ENCODE measurements at regions of chr1 and their contacts with region 1.

Region 1: GRCh38 chr1:57659804-57660203 is 235.9 kb upstream of the DAB1 start:
- DNase-seq: no peak
- H3K4me3 ChIP-seq: no peak overlapping the region
- H3K27ac ChIP-seq: no peak overlapping the region
- H3K4me1 ChIP-seq: no peaks in the 10 kb centered on the region
- H3K27me3 ChIP-seq: no peaks in the 10 kb centered on the region
- CTCF ChIP-seq: no peak
- EP300 ChIP-seq: no peak
- POLR2A ChIP-seq: no peak

Region 2: DNA sequence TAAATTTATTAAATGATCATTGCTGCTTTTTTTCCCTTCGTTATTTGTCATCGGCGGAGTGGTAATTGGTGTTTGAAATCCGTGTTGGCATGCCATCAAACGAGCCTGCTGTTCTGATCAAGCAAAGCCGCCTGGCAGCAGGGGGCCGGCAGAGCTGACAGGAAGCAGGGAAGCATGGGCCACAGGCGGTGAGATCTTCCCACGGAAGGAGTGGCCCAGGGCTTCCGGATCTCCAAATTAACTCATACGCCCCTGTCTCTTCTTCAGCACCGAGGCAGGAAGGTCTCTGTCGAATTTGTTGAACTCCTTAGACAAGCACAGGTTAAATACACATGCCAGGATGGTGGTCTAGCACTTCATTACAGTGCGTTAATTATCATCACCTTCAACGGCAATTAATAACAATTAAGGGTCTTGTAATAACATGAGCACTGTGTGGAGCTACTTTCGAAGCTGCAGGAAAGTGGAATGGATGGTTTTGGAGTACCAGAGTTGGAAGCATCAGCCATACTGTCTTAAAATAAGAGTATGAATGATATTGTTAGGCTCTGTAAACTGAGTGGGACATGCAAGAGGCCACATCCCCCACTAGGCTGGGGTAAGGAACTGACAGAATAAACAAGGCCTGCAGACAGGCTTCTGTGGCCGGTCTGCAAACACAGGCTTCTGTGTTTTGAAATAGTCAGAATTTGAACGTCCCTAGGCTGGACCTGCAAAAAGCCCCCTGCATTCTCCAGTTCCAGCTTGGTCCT is 36.6 kb before region 1 on chr1:
- intact Hi-C with region 1: no loop called
- DNase-seq: peak in 4 of 5 donors; percentile 34 to 57 (median 43)
- H3K4me3 ChIP-seq: no peak overlapping the region
- H3K27ac ChIP-seq: no peak overlapping the region
- H3K4me1 ChIP-seq: peaks cover 9% of the 10 kb centered on the region
- H3K27me3 ChIP-seq: no peaks in the 10 kb centered on the region
- CTCF ChIP-seq: no peak
- EP300 ChIP-seq: no peak
- POLR2A ChIP-seq: no peak

Region 3: DNA sequence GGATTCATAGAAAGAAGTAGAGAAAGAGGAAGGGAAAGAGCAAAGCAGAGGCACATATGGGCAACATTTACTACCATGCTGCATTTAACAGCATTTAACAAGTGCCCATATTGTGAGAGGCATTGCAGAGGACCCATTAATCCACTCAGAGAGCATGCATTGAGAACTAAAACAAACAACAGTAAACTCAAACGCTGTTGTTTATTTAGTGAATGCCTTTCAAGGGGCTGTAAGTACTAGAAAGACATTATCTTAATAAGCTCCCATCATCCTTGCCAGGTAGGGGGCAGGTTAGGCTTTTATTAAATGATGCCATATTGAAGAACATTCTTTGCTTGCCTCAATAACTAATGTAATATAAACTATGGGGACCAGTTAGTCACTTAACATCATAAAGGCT is 18.3 kb after region 1 on chr1:
- intact Hi-C with region 1: loop called in 1 of 4 experiments (anchors 2 kb)
- DNase-seq: no peak
- H3K4me3 ChIP-seq: no peak overlapping the region
- H3K27ac ChIP-seq: no peak overlapping the region
- H3K4me1 ChIP-seq: no peaks in the 10 kb centered on the region
- H3K27me3 ChIP-seq: no peaks in the 10 kb centered on the region
- CTCF ChIP-seq: no peak
- EP300 ChIP-seq: no peak
- POLR2A ChIP-seq: no peak

Region 4: GRCh38 chr1:58000116-58000515 is 340.3 kb after region 1 on chr1:
- intact Hi-C with region 1: no loop called
- DNase-seq: no peak
- H3K4me3 ChIP-seq: no peak overlapping the region
- H3K27ac ChIP-seq: no peak overlapping the region
- H3K4me1 ChIP-seq: no peaks in the 10 kb centered on the region
- H3K27me3 ChIP-seq: no peaks in the 10 kb centered on the region
- CTCF ChIP-seq: no peak
- EP300 ChIP-seq: no peak
- POLR2A ChIP-seq: no peak